ENCODE measurements at regions of chr11 and their contacts with region 1.

Region 1: GRCh38 chr11:131064373-131064991 is 148.2 kb upstream of the SNX19 start:
- DNase-seq: peak; percentile 68
- H3K4me3 ChIP-seq: no peak overlapping the region
- H3K27ac ChIP-seq: no peak overlapping the region
- H3K4me1 ChIP-seq: no peaks in the 10 kb centered on the region
- CTCF ChIP-seq: peak; percentile 94

Region 2: DNA sequence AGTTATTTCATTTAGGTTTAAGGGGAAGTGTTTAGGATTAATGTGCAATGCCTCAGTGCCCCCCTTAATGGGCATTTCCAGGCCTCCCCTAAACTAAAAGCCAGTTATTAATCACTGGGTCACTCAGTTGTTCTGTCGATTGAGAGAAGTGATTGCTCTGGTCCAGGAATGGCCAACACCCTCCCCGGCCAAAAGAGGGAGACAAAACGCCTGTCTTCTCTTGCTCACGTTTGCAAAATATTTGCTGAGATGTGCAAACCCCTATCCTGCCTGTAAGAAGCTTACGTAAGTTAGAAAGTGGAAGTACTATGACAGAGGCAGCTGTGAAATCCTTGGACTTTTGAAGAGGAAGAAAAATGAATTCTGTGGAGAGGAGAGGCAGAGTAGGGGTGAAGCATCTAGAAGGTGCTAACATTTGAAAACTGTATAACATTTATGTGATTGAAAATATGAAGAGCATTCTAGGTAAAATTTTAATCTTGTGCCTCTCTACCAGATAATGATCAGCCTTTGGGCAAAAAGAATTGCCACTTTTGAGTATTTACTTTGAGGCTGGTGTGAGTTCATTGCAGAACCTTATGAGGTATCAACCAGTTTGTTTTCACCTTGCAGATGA is 343.7 kb after region 1 on chr11:
- CTCF ChIA-PET with region 1: no interaction called
- POLR2A ChIA-PET with region 1: no interaction called
- intact Hi-C with region 1: loop called (anchors 10 kb)
- DNase-seq: peak; percentile 17
- H3K4me3 ChIP-seq: no peak overlapping the region
- H3K27ac ChIP-seq: no peak overlapping the region
- H3K4me1 ChIP-seq: no peaks in the 10 kb centered on the region
- CTCF ChIP-seq: peak; percentile 77

Measured in OCI-LY7 (cell line).